Activated CD8-positive, alpha-beta T cell treated with anti-CD3 and anti-CD28 coated beads, Interleukin-2, amount 10 ng/mL, durations not matched to agents 7 days and 5 days (primary cell): ENCODE measurements at regions of chr12 and their contacts with region 1.

Region 1: DNA sequence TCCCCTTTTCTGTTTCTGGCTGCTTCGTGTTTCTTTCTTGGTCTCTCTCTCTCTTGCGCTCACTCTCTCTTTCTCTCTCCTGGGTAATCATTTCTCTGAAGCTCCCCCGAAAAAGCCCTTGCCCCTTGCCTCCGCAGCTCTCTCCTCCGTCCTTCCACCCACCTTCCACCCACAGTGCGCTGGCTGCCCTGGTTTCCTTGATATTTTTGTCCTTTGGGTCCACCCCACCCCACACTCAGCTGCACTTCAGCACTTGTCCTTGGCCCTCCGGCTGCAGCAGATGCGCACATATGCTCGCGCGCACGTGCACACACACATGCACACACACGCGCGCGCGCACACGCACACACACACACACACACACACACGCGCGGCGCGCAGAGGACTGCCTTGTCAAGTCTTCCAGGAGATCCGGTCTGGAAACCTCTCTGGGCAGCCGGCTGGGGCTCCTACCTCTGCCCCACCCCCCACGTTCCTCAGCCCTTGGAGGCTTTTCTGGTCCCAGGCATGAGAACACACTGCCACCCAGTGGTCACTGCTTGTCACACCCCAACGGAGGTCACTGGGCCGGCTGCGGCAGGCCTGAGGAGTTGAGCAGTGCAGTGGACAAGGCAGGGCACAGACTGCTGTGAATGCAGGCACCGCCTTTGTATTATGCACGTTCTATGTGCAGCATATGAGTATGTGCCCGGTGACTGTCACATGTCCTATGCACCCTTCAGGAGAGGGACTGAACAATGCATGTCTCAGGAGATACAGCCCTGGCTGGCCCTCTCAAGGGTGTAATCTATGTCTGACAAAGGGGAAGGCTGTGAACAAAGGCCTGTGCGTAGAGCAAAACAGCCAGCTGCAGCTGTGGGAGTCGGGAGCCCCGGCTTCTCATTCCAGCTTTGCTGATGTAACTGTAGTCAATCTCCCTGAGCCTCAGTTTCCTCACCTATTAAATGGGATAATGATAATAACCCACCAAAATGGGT is 6.5 kb downstream of the LAG3 start:
- DNase-seq: peak; percentile 94
- ATAC-seq: peak; percentile 79
- H3K4me3 Mint-ChIP-seq: peak overlapping the region; percentile 66
- H3K27ac Mint-ChIP-seq: peak overlapping the region; percentile 79
- H3K4me1 Mint-ChIP-seq: peaks cover 59% of the 10 kb centered on the region
- H3K27me3 Mint-ChIP-seq: no peaks in the 10 kb centered on the region

Region 2: DNA sequence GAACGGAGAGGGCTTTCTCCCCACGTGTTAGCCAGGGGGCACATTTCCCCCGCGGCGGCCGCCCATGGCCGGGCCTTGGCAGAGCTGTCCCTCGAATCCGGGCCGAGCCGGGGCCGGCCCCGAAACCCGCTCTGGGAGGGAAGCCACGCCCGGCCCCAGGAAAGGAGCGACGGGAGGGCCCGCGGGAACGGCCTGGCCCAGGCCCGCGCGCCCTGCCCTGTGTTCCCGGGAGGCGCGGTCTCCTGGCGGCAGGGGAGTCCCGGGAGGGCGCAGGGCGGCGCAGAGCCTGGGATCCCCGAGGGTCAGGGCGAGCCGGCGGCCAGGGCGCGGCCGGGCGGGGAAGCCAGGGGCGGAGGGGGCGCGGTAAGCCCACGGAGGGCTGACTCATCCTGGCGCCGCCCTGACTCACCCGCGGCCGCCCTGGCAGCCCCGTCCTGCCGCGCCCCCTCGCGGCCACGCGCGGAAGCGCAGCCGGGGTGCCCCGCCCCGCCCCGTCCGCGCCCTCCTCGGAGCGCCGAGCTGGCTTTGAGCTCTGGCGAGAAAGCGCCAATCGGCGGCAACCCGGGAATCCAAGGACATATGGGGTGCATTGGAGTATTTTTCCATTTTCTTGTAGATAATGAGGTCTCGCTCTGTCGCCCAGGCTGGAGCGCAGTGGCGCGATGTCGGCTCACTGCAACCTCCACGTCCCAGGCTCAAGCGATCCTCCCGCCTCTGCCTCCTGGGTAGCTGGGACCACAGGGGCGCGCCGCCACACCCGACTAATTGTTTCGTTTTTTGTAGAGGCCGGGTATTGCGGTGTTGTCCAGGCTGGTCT is 500.2 kb before region 1 on chr12:
- CTCF ChIA-PET with region 1: no interaction called
- POLR2A ChIA-PET with region 1: no interaction called
- DNase-seq: peak; percentile 84
- ATAC-seq: peak; percentile 97
- H3K4me3 Mint-ChIP-seq: peak overlapping the region; percentile 71
- H3K27ac Mint-ChIP-seq: no peak overlapping the region
- H3K4me1 Mint-ChIP-seq: peaks cover 9% of the 10 kb centered on the region
- H3K27me3 Mint-ChIP-seq: peaks cover 19% of the 10 kb centered on the region

Region 3: GRCh38 chr12:6764011-6764828 is 14.6 kb before region 1 on chr12:
- CTCF ChIA-PET with region 1: interaction called, 378 read pairs
- POLR2A ChIA-PET with region 1: interaction called, 14 read pairs
- DNase-seq: peak; percentile 75
- ATAC-seq: peak; percentile 67
- H3K4me3 Mint-ChIP-seq: peak overlapping the region; percentile 19
- H3K27ac Mint-ChIP-seq: peak overlapping the region; percentile 23
- H3K4me1 Mint-ChIP-seq: peaks cover 43% of the 10 kb centered on the region
- H3K27me3 Mint-ChIP-seq: peaks cover 43% of the 10 kb centered on the region

Region 4: DNA sequence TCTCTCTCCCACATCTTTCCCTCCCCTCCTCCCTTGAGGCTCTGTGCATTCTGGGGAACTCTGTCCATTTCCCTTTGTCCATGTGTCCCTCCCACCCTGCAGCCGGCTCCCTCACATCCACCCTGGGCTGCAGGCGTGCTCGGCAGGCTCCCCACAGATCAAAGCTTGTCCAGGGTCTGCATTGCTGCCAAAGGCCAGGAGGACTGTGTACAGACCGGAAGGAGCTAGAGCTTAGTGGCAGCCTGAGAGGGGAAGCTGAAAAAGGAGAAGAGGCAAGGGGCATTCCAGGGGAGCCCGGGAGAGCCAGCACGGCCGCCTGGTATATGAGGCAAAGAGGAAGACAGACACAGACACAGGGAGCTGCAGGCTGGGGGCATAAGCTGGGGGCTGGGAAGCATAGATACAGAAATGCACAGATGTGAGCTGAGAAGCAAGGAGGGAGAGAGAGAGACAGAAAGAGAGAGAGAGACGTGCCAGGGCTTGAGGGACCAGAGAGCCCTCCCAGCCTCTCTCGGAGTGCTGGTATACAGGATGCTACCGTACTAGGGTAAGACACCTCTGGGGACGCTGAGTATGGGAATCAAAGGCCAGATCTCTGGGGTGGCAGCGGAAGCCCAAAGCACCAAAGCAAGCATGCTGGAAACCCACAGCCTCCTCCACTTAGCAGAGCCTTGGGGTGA is 13.8 kb after region 1 on chr12:
- CTCF ChIA-PET with region 1: interaction called, 160 read pairs
- POLR2A ChIA-PET with region 1: interaction called, 9 read pairs
- DNase-seq: peak; percentile 69
- ATAC-seq: peak; percentile 90
- H3K4me3 Mint-ChIP-seq: peak overlapping the region; percentile 35
- H3K27ac Mint-ChIP-seq: peak overlapping the region; percentile 34
- H3K4me1 Mint-ChIP-seq: peaks cover 30% of the 10 kb centered on the region
- H3K27me3 Mint-ChIP-seq: peaks cover 28% of the 10 kb centered on the region

Region 5: DNA sequence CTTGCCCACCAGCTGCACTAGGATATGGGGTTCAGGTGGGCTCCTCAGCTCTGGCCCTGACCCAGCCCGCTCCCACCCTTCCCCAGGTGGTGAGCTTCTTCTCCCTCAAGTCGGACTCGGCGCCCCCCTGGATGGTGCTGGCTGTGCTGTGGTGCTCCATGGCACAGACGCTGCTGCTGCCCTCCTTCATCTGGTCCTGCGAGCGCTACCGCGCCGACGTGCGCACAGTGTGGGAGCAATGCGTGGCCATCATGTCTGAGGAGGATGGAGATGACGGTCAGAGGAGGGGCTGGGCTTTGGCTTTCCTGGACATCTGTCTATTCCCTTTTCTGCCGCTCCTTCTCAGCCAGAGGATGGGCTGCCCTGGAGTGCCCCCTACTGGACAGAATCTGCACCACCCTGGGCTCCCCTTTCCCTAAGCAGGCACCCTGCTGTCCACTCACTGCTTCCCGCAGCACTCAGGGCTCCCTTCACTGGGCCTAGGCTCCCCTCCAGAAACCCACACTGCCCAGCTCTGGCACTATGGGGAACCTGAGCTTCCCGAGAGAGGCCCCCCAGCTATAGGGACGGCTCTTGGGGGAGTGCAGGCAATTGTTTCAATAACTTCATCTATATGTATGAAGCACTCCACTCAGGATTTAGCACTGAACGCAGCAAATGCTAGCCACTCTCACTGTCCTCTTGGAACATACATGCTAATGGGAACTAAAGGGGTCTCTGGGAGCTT is 46.7 kb after region 1 on chr12:
- CTCF ChIA-PET with region 1: interaction called, 18 read pairs
- POLR2A ChIA-PET with region 1: interaction called, 3 read pairs
- DNase-seq: peak; percentile 87
- ATAC-seq: peak; percentile 69
- H3K4me3 Mint-ChIP-seq: no peak overlapping the region
- H3K27ac Mint-ChIP-seq: no peak overlapping the region
- H3K4me1 Mint-ChIP-seq: peaks cover 38% of the 10 kb centered on the region
- H3K27me3 Mint-ChIP-seq: peaks cover 74% of the 10 kb centered on the region

Region 6: GRCh38 chr12:6833189-6833890 is 54.5 kb after region 1 on chr12:
- CTCF ChIA-PET with region 1: interaction called, 15 read pairs
- POLR2A ChIA-PET with region 1: interaction called, 3 read pairs
- DNase-seq: no peak
- ATAC-seq: no peak
- H3K4me3 Mint-ChIP-seq: no peak overlapping the region
- H3K27ac Mint-ChIP-seq: no peak overlapping the region
- H3K4me1 Mint-ChIP-seq: peaks cover 12% of the 10 kb centered on the region
- H3K27me3 Mint-ChIP-seq: peaks cover 28% of the 10 kb centered on the region